ENCODE measurements at regions of chr2 and their contacts with region 1.

Region 1: GRCh38 chr2:67215214-67216055 is 181.7 kb upstream of the ETAA1 start:
- DNase-seq: peak; percentile 46 to 64
- H3K4me3 ChIP-seq: no peak overlapping the region
- H3K4me3 Mint-ChIP-seq: no peak overlapping the region
- H3K27ac Mint-ChIP-seq: no peak overlapping the region
- H3K4me1 ChIP-seq: no peaks in the 10 kb centered on the region
- H3K4me1 Mint-ChIP-seq: no peaks in the 10 kb centered on the region
- H3K27me3 ChIP-seq: no peaks in the 10 kb centered on the region
- H3K27me3 Mint-ChIP-seq: no peaks in the 10 kb centered on the region
- CTCF ChIP-seq: peak; percentile 51 to 65

Region 2: GRCh38 chr2:66587216-66587615 is 628.2 kb before region 1 on chr2:
- CTCF ChIA-PET with region 1: no interaction called
- POLR2A ChIA-PET with region 1: no interaction called
- intact Hi-C with region 1: loop called (anchors 1 kb)
- DNase-seq: peak; percentile 55 to 60
- H3K4me3 ChIP-seq: no peak overlapping the region
- H3K4me3 Mint-ChIP-seq: no peak overlapping the region
- H3K27ac Mint-ChIP-seq: no peak overlapping the region
- H3K4me1 ChIP-seq: no peaks in the 10 kb centered on the region
- H3K4me1 Mint-ChIP-seq: no peaks in the 10 kb centered on the region
- H3K27me3 ChIP-seq: no peaks in the 10 kb centered on the region; the same call in 1 of the 2 replicates
- H3K27me3 Mint-ChIP-seq: no peaks in the 10 kb centered on the region
- CTCF ChIP-seq: peak in 1 of 2 experiments; percentile 69

Region 3: GRCh38 chr2:66982766-66983165 is 232.7 kb before region 1 on chr2:
- CTCF ChIA-PET with region 1: no interaction called
- POLR2A ChIA-PET with region 1: no interaction called
- intact Hi-C with region 1: loop called (anchors 1 kb)
- DNase-seq: no peak
- H3K4me3 ChIP-seq: no peak overlapping the region
- H3K4me3 Mint-ChIP-seq: no peak overlapping the region
- H3K27ac Mint-ChIP-seq: no peak overlapping the region
- H3K4me1 ChIP-seq: no peaks in the 10 kb centered on the region
- H3K4me1 Mint-ChIP-seq: no peaks in the 10 kb centered on the region
- H3K27me3 ChIP-seq: no peaks in the 10 kb centered on the region
- H3K27me3 Mint-ChIP-seq: no peaks in the 10 kb centered on the region
- CTCF ChIP-seq: no peak